ENCODE measurements at regions of chr22 and their contacts with region 1.

Region 1: GRCh38 chr22:46006379-46007002 is 29.5 kb upstream of the WNT7B start:
- DNase-seq: peak; percentile 81

Region 2: DNA sequence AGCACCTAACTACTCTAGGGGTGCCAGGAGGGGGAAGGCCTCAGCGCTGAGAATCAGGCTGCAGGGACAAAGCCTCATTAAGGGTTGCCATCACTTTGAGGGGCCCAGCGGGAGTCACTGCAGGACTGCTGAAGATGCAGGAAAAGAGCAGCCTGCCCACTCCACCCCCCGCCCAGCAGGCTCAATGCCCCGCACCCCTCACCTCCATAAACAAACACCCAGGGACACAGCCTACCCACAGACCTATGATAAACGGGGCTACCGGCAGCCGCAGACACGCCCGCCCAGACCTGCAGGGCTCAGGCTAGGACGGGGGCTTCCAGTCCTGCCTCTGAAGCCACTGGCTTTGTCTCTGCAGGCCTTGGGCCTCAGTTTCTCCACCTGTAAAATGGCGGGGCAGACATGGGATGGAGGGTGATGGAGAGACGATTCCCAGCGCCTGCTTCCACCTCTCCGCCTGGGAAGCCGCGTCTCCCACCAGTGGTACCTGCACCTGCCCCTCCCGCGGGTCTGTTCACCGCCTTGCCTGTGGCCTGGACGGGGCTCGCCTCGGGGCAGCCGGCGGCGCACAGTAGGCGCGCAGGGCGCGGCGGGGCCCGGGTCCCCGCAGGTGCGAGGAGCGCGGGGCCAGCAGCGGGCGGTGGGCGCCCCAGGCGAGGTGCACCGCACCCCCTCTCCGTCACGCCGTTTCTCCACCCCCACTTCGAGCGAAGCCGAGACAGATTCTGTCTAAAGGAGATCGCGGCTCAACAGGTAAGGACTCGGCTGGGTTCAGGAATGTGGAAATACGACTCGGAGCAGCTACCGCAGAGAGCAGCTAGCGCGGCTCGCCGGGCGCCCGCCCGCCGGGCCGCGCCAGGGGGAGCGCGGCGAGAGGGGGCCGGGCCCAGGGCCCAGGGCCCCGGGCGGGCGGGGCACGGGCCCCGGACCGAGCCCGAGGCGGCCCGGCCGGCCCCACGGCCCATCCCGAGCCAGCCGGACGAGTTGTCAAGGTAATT is 31.0 kb before region 1 on chr22:
- CTCF ChIA-PET with region 1: no interaction called
- POLR2A ChIA-PET with region 1: no interaction called
- DNase-seq: no peak

Region 3: GRCh38 chr22:45994491-45995404 is 11.7 kb before region 1 on chr22:
- CTCF ChIA-PET with region 1: interaction called, 43 read pairs
- POLR2A ChIA-PET with region 1: interaction called, 4 read pairs
- DNase-seq: peak; percentile 86

Region 4: GRCh38 chr22:46035742-46036557 is 29.5 kb after region 1 on chr22:
- CTCF ChIA-PET with region 1: interaction called, 13 read pairs
- POLR2A ChIA-PET with region 1: interaction called, 69 read pairs
- DNase-seq: peak; percentile 100

Region 5: DNA sequence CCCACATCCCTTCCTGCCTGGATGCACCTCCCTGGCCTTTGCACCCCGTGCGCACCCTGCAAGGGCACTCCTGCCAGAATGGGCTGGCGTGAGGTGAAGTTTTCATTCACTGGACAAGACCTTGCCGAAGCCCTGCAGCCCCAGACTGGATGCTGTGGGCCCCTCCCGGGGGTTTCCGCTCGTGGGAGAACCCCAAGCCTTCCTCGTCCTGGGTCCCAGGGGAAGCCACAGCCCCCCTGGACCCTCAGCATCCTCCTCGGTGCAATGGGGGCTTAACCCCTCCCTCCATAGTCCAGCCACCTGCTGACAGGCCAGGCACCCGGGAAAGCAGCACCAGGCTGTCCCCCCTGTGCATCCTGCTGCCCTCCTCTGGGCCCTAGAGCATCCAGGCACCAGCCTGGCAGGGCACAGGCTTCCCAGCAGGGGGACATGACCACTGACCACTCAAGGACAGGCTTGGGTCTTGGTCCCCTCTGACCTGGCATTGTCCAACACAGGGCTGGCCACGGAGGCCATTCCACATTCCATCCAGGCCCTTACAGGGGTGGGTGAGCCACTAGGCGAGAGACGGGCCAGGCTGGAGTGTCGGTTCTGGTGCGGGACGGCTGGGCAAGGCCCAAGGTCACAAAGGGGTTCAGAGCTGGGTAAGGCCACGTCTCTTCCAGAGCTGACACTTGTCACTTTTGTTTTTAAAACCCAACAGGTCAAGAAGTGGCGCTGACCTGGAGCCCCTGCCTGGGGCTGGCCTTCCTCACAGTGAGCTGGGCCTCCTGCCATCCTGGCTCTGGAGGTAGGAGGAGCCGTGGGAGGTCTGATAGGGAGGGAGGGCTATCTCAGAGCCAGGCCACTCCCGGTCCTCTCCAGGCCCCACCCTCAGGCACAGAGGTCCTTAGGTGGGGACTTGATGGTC is 102.3 kb after region 1 on chr22:
- CTCF ChIA-PET with region 1: interaction called, 113 read pairs
- POLR2A ChIA-PET with region 1: interaction called, 4 read pairs
- DNase-seq: peak; percentile 39

Region 6: GRCh38 chr22:46116491-46116958 is 110.0 kb after region 1 on chr22:
- CTCF ChIA-PET with region 1: interaction called, 113 read pairs
- POLR2A ChIA-PET with region 1: interaction called, 18 read pairs
- DNase-seq: peak; percentile 92

Region 7: GRCh38 chr22:46286006-46286405 is 279.5 kb after region 1 on chr22:
- CTCF ChIA-PET with region 1: no interaction called
- POLR2A ChIA-PET with region 1: no interaction called
- DNase-seq: no peak

Measured in HEK293T (cell line).